ENCODE measurements at regions of chr5 and their contacts with region 1.

Region 1: GRCh38 chr5:138035605-138036537 is 3.0 kb upstream of the FAM13B start:
- DNase-seq: peak; percentile 20 to 87 (median 68)

Region 2: DNA sequence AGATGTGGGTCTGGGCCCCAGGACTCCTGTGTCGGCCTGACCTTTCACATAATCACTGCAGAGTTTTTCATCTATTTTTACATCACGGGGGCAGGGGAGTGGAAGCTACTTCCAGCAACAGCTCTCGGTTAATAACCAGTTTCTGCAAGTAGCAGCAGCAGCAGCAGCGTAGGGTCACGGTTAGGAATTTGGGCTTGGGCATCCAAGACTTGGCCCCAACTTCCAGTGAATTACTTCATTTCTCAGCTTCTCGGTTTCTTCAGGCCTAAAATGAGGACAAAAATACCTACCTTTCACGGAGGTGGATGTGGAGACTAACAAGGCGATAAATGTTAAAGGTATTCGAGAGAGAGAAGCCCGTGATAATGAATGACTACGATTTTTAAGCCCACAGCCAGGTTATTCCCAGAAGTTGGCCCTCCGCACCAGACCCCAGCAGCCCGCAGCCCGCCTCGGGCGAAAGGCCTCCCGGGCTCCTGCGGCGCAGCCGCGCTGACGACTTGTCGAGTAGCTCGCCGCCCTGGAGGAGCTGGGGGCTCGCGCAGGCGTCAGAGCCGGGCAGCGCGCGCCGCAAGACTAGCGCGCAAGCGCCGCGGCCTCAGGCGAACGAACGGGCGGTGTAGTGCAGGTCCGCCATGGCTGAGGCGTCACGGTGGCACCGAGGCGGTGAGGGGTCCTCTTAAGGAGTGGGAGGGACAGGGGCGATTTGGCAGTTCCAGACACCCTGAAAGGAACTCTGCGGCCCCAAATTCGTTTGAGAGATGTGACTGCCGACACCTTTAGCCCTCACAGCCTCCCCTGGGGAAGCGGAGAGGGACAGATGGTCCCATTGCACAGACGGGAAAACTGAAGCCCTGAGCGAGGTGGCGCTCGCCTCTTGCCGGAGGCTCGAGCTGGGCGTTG is 146.8 kb before region 1 on chr5 and contains the start of gene PKD2L2:
- intact Hi-C with region 1: loop called (anchors 10 kb)
- DNase-seq: peak; percentile 50 to 94 (median 86)

Region 3: DNA sequence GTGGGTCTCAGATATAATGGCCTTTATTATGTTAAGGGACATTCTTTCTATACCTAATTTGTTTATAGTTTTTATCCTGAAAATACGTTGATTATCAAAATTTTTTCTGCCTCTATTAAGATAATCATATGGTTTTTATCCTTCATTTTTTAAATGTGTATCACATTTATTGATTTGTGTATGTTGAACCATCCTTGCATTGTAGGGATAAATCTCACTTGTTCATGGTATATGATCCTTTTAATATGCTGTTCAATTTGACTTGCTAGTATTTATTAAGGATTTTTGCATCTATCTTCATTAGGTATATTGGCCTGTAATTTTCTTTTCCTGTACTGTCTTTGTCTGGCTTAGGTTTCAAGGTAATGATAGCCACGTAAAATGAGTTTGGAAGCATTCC is 121.1 kb before region 1 on chr5:
- intact Hi-C with region 1: no loop called
- DNase-seq: no peak

Region 4: GRCh38 chr5:138069068-138069600 is 33.3 kb after region 1 on chr5:
- intact Hi-C with region 1: loop called (anchors 2 kb)
- DNase-seq: no peak

Region 5: DNA sequence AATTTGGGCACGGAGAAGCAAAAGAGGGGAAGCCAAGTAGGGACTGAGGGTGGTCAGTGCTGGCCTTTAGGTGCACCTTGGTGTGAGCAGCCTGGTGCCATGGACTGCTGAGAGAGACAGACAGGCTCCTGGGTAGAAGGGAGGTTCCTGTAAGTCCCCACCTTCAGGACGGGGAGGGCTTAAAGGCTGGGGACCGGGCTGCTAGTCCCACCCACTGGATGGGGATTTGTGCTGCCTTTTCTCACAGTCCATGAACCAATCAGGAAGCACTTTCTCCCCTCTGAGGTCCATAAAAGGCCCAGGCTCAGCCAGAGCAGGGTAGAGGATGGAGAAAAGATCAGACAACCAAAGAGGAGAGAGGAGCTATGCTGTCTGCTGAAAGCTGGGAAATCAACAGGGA is 280.5 kb after region 1 on chr5:
- intact Hi-C with region 1: no loop called
- DNase-seq: peak in 3 of 42 donors; percentile 8 to 16 (median 13)

Region 6: GRCh38 chr5:138874771-138875551 is 839.1 kb after region 1 on chr5 and contains the start of gene LRRTM2:
- intact Hi-C with region 1: no loop called
- DNase-seq: peak; percentile 25 to 93 (median 76)

Measured in head of caudate nucleus (tissue), 42 donors.